GM12878 (cell line): ENCODE measurements at regions of chr12 and their contacts with region 1.

Region 1: GRCh38 chr12:862303-862911 is 87.1 kb downstream of the RAD52 start:
- DNase-seq: no peak
- ATAC-seq: no peak
- H3K4me3 ChIP-seq: no peak overlapping the region
- H3K27ac ChIP-seq: no peak overlapping the region
- H3K4me1 ChIP-seq: 0 out of 2 replicates have a peak, but pooled peaks cover 2% of the 10 kb centered on the region
- H3K27me3 ChIP-seq: no peaks in the 10 kb centered on the region
- CTCF ChIP-seq: no peak
- EP300 ChIP-seq: no peak
- POLR2A ChIP-seq: no peak
- RAD21 ChIP-seq: no peak

Region 2: GRCh38 chr12:779745-780734 is 82.4 kb before region 1 on chr12:
- CTCF ChIA-PET with region 1: no interaction called
- POLR2A ChIA-PET with region 1: no interaction called
- RAD21 ChIA-PET with region 1: no interaction called
- SMC1A ChIA-PET with region 1: no interaction called
- in situ Hi-C with region 1: no loop called
- intact Hi-C with region 1: no loop called
- DNase-seq: no peak
- ATAC-seq: peak; percentile 50
- H3K4me3 ChIP-seq: peak overlapping the region; percentile 50
- H3K27ac ChIP-seq: peak overlapping the region; percentile 46
- H3K4me1 ChIP-seq: peaks cover 22% of the 10 kb centered on the region
- H3K27me3 ChIP-seq: no peaks in the 10 kb centered on the region
- CTCF ChIP-seq: no peak
- EP300 ChIP-seq: no peak
- POLR2A ChIP-seq: no peak
- RAD21 ChIP-seq: no peak

Region 3: DNA sequence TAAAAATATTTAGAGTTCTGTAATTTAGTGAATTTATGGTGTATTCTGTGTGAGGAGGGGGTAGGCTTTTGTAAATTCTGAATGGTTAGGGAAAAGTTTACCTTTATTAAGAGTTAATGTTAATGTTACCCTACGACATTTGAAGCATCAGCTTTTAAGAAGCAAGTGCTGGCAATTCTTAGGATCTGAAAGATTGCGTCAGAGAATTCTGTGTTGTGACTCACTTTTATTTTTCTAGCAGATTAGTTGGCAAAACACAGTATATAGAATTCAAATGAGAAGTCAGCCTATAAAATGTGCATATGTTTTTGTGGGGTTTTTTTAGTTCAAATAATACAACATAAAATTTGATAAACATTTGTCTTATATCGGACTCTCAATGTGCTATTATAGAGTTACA is 10.5 kb before region 1 on chr12:
- CTCF ChIA-PET with region 1: interaction called, 10 read pairs
- POLR2A ChIA-PET with region 1: interaction called, 3 read pairs
- RAD21 ChIA-PET with region 1: no interaction called
- SMC1A ChIA-PET with region 1: interaction called, 9 read pairs
- in situ Hi-C with region 1: no loop called
- intact Hi-C with region 1: no loop called
- DNase-seq: no peak
- ATAC-seq: no peak
- H3K4me3 ChIP-seq: no peak overlapping the region
- H3K27ac ChIP-seq: no peak overlapping the region
- H3K4me1 ChIP-seq: no peaks in the 10 kb centered on the region
- H3K27me3 ChIP-seq: no peaks in the 10 kb centered on the region
- CTCF ChIP-seq: no peak
- EP300 ChIP-seq: no peak
- POLR2A ChIP-seq: no peak
- RAD21 ChIP-seq: no peak

Region 4: DNA sequence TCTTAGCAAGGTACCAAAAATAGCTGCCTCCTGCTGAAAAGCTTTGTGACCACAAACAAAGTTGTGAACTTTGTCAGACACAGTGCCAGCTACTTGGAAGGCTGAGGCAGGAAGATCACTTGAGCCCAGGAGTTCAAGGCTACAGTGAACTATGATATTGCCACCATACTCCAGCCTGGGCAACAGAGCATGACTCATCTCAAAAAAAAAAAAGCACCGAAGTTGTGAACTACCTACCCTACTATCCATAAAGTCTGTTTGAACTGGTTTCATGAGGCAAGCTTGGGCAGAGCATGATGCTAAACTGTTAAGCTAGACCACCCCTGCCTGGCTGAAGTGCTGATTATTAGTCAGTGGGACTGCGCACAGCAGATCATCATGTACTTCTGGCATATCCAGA is 11.5 kb after region 1 on chr12:
- CTCF ChIA-PET with region 1: interaction called, 15 read pairs
- POLR2A ChIA-PET with region 1: interaction called, 4 read pairs
- RAD21 ChIA-PET with region 1: interaction called, 3 read pairs
- SMC1A ChIA-PET with region 1: interaction called, 5 read pairs
- in situ Hi-C with region 1: no loop called
- intact Hi-C with region 1: no loop called
- DNase-seq: no peak
- ATAC-seq: peak; percentile 26
- H3K4me3 ChIP-seq: no peak overlapping the region
- H3K27ac ChIP-seq: no peak overlapping the region
- H3K4me1 ChIP-seq: no peaks in the 10 kb centered on the region
- H3K27me3 ChIP-seq: no peaks in the 10 kb centered on the region
- CTCF ChIP-seq: no peak
- EP300 ChIP-seq: no peak
- POLR2A ChIP-seq: no peak
- RAD21 ChIP-seq: no peak